Caco-2 (cell line): ENCODE measurements at regions of chr1 and their contacts with region 1.

Region 1: DNA sequence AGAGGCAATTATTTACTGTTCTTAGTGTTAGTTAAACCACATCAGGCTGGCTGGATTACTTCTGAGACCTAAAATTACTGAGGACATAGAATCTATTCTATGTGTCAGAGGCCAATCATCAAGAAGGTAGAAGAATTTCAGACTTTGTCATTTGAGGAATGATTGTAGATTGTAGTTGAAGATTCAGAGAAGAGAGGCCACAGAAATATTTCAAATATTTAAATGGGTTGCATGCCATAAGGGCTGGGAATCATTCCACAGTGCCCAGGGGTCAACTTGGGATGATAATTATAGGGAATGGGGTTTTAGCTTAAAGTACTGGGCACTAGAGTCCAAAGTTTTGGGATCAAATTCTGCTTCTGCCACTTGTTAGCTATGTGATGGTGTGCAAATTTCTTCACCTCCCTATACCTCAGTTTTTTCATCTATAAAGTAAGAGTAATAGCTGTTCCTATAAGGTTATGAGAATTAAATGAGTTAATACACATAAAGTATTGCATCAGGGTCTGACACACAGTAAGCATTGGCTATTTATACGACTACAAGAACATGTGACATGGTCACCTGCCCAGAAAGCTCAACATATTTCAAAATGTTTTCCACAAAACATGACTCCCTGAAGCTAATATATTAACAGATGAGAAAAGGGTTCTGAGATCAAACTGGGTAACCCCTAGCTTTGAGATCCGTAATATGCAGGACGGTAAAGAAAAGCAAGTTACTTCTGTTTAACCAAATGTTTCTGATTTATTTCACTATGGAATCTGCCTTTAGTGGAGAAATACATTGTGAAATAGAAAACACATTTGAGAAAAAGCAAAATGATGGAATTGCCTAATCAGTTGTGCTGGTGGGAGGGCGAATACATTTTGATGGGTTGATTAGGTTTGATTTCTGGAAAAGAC is 69.7 kb upstream of the SPAG17 start:
- DNase-seq: peak in 1 of 2 experiments; percentile 0
- H3K4me3 ChIP-seq: no peak overlapping the region
- H3K4me3 Mint-ChIP-seq: no peak overlapping the region
- H3K27ac Mint-ChIP-seq: no peak overlapping the region
- H3K4me1 ChIP-seq: no peaks in the 10 kb centered on the region
- H3K4me1 Mint-ChIP-seq: no peaks in the 10 kb centered on the region
- H3K27me3 ChIP-seq: no peaks in the 10 kb centered on the region
- H3K27me3 Mint-ChIP-seq: no peaks in the 10 kb centered on the region
- CTCF ChIP-seq: no peak

Region 2: GRCh38 chr1:118021668-118022067 is 233.1 kb before region 1 on chr1:
- CTCF ChIA-PET with region 1: no interaction called
- POLR2A ChIA-PET with region 1: no interaction called
- intact Hi-C with region 1: no loop called
- DNase-seq: no peak
- H3K4me3 ChIP-seq: no peak overlapping the region
- H3K4me3 Mint-ChIP-seq: no peak overlapping the region
- H3K27ac Mint-ChIP-seq: no peak overlapping the region
- H3K4me1 ChIP-seq: no peaks in the 10 kb centered on the region
- H3K4me1 Mint-ChIP-seq: no peaks in the 10 kb centered on the region
- H3K27me3 ChIP-seq: no peaks in the 10 kb centered on the region; the same call in 1 of the 2 replicates
- H3K27me3 Mint-ChIP-seq: peaks cover 10% of the 10 kb centered on the region
- CTCF ChIP-seq: no peak

Region 3: GRCh38 chr1:118081401-118081800 is 173.4 kb before region 1 on chr1:
- CTCF ChIA-PET with region 1: no interaction called
- POLR2A ChIA-PET with region 1: no interaction called
- intact Hi-C with region 1: no loop called
- DNase-seq: peak in 1 of 2 experiments; percentile 3
- H3K4me3 ChIP-seq: no peak overlapping the region
- H3K4me3 Mint-ChIP-seq: peak overlapping the region; percentile 12
- H3K27ac Mint-ChIP-seq: no peak overlapping the region
- H3K4me1 ChIP-seq: no peaks in the 10 kb centered on the region
- H3K4me1 Mint-ChIP-seq: peaks cover 9% of the 10 kb centered on the region
- H3K27me3 ChIP-seq: no peaks in the 10 kb centered on the region
- H3K27me3 Mint-ChIP-seq: peaks cover 4% of the 10 kb centered on the region
- CTCF ChIP-seq: no peak

Region 4: GRCh38 chr1:118244194-118244593 is 10.6 kb before region 1 on chr1:
- CTCF ChIA-PET with region 1: no interaction called
- POLR2A ChIA-PET with region 1: no interaction called
- intact Hi-C with region 1: no loop called
- DNase-seq: no peak
- H3K4me3 ChIP-seq: no peak overlapping the region
- H3K4me3 Mint-ChIP-seq: no peak overlapping the region
- H3K27ac Mint-ChIP-seq: no peak overlapping the region
- H3K4me1 ChIP-seq: no peaks in the 10 kb centered on the region
- H3K4me1 Mint-ChIP-seq: no peaks in the 10 kb centered on the region
- H3K27me3 ChIP-seq: no peaks in the 10 kb centered on the region
- H3K27me3 Mint-ChIP-seq: no peaks in the 10 kb centered on the region
- CTCF ChIP-seq: no peak

Region 5: DNA sequence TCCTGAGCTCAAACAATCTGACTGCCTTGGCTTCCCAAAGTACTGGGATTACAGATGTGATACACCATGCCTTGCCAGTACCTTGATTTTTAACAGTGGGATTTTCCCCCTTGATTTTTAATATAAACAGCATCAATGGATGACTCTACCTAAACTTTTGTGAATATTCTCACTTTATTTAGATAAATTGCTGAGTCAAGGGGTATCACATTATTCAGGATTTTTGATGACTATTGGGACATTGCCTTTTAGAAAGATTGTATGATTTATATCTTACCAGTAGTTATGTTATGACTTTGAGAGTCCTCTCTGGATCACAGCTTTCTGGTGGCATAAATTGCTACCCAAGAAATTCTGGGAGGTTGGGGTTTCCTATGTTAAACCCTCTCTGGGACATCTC is 42.7 kb after region 1 on chr1:
- CTCF ChIA-PET with region 1: no interaction called
- POLR2A ChIA-PET with region 1: no interaction called
- intact Hi-C with region 1: loop called (anchors 2 kb)
- DNase-seq: no peak
- H3K4me3 ChIP-seq: no peak overlapping the region
- H3K4me3 Mint-ChIP-seq: no peak overlapping the region
- H3K27ac Mint-ChIP-seq: no peak overlapping the region
- H3K4me1 ChIP-seq: no peaks in the 10 kb centered on the region
- H3K4me1 Mint-ChIP-seq: peaks cover 6% of the 10 kb centered on the region
- H3K27me3 ChIP-seq: no peaks in the 10 kb centered on the region
- H3K27me3 Mint-ChIP-seq: peaks cover 2% of the 10 kb centered on the region
- CTCF ChIP-seq: no peak